ENCODE measurements at regions of chr7 and their contacts with region 1.

Region 1: GRCh38 chr7:55534175-55534915 is 38.0 kb downstream of the VOPP1 start:
- DNase-seq: peak in 3 of 5 donors; percentile 27 to 84 (median 33)
- H3K4me3 ChIP-seq: peak overlapping the region in 1 of 2 donors; percentile 22
- H3K4me3 Mint-ChIP-seq: peak overlapping the region; percentile 71 to 88 (median 76)
- H3K27ac ChIP-seq: peak overlapping the region; percentile 60
- H3K27ac Mint-ChIP-seq: peak overlapping the region; percentile 92 to 97 (median 95)
- H3K4me1 ChIP-seq: peaks cover 96% of the 10 kb centered on the region
- H3K4me1 Mint-ChIP-seq: peaks cover 82 to 97% (median 91%) of the 10 kb centered on the region in 4 donors
- H3K27me3 ChIP-seq: no peaks in the 10 kb centered on the region
- H3K27me3 Mint-ChIP-seq: no peaks in the 10 kb centered on the region

Region 2: GRCh38 chr7:55546829-55547228 is 12.5 kb after region 1 on chr7:
- CTCF ChIA-PET with region 1: interaction called, 17 read pairs
- POLR2A ChIA-PET with region 1: interaction called, 15 read pairs
- intact Hi-C with region 1: loop called (anchors 2 kb)
- DNase-seq: no peak
- H3K4me3 ChIP-seq: no peak overlapping the region
- H3K4me3 Mint-ChIP-seq: peak overlapping the region in 1 of 8 donors; percentile 23
- H3K27ac ChIP-seq: no peak overlapping the region
- H3K27ac Mint-ChIP-seq: peak overlapping the region in 3 of 7 donors; percentile 32 to 69 (median 35)
- H3K4me1 ChIP-seq: peaks cover 63% of the 10 kb centered on the region
- H3K4me1 Mint-ChIP-seq: peaks cover 56 to 89% (median 75%) of the 10 kb centered on the region in 4 donors
- H3K27me3 ChIP-seq: no peaks in the 10 kb centered on the region
- H3K27me3 Mint-ChIP-seq: no peaks in the 10 kb centered on the region

Region 3: DNA sequence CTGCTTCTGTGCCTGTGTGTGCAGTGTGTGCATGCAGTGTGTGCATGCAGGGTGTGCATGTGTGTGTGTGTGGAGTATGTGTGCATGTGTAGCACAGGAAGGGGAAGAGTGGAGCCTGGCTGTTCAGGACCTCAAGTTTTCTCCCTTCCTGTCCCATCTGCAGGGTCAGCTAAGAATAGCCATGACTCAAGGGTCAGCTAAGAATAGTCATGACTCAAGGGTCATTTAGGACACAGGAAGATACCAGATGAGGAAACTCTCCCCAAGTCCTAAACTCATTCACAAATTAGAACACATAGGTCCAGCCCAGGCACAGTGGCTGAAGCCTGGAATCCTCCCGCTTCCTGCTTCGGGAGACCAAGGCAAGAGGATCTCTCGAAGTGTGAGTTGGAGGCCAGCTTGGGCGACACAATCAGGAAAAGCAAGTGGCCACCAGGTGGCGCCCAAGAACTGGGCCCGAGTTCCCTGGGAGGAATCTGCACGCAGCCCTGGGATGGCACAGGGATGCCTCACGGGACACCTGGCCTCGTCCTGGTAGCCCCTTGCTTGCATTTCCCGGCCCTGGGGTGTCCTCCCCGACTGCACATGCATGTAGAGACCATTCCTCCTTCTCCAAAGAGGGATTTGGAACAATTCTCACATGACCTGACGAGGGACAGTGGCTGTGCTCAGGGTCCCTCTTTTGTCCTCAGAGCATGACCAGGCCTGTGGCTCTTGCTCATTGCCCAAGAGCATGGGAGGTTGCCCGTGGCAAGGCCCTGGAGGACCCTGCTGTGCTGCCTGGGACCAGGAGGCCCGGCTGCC is 59.4 kb after region 1 on chr7:
- CTCF ChIA-PET with region 1: interaction called, 21 read pairs
- POLR2A ChIA-PET with region 1: interaction called, 4 read pairs
- intact Hi-C with region 1: no loop called
- DNase-seq: peak; percentile 50 to 67 (median 55)
- H3K4me3 ChIP-seq: no peak overlapping the region
- H3K4me3 Mint-ChIP-seq: no peak overlapping the region
- H3K27ac ChIP-seq: no peak overlapping the region
- H3K27ac Mint-ChIP-seq: no peak overlapping the region
- H3K4me1 ChIP-seq: peaks cover 17% of the 10 kb centered on the region
- H3K4me1 Mint-ChIP-seq: peaks cover 7 to 24% (median 15%) of the 10 kb centered on the region in 4 donors
- H3K27me3 ChIP-seq: no peaks in the 10 kb centered on the region
- H3K27me3 Mint-ChIP-seq: peaks cover 4 to 6% of the 10 kb centered on the region in 2 donors

Region 4: DNA sequence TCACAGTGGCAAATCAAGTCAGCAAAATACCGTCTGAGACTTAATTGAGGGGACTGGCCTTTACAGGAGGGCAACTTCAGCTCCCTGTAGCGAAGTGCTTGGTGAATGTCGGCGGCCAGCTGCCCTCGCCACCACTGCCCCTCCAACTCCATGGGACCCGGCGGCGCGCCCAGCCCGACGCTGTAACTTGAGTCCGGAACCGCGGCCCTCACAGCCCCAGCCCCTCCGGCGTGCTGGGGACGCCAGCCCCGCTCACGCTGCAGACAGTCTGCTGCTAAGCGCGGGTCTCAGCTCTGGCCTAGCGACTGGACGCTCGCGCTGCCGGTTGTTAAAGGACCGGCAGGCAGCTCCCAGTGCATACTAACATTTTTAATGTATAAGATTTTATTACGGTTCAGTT is 695.3 kb after region 1 on chr7:
- CTCF ChIA-PET with region 1: no interaction called
- POLR2A ChIA-PET with region 1: no interaction called
- intact Hi-C with region 1: no loop called
- DNase-seq: no peak
- H3K4me3 ChIP-seq: no peak overlapping the region
- H3K4me3 Mint-ChIP-seq: no peak overlapping the region
- H3K27ac ChIP-seq: no peak overlapping the region
- H3K27ac Mint-ChIP-seq: no peak overlapping the region
- H3K4me1 ChIP-seq: no peaks in the 10 kb centered on the region
- H3K4me1 Mint-ChIP-seq: no peaks in the 10 kb centered on the region
- H3K27me3 ChIP-seq: no peaks in the 10 kb centered on the region
- H3K27me3 Mint-ChIP-seq: peaks cover 3 to 4% of the 10 kb centered on the region in 2 donors